ENCODE measurements at regions of chr9 and their contacts with region 1.

Region 1: DNA sequence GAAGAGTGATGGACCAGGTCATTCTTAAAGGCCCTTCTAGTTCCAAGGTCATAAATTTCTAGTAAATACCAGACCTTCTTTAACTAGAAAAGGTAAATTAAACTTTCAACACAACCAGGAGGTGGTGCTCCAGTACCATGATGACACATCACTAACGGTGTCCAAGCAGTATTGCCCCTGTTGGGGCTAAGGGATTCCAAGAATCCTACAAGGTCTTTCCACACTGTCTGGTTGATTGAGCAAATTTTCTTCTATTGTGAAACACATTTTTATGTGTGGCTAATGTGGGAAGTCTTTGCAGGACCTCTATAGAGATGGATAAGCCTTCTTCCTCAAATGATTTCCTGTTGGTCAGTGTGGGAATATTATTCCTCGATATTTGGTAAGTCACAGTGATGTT is 459.6 kb upstream of the PAPPA start:
- DNase-seq: peak; percentile 65
- H3K4me3 ChIP-seq: no peak overlapping the region
- H3K27ac ChIP-seq: no peak overlapping the region
- H3K4me1 ChIP-seq: peaks cover 20% of the 10 kb centered on the region
- H3K27me3 ChIP-seq: no peaks in the 10 kb centered on the region
- CTCF ChIP-seq: peak; percentile 41 to 60

Region 2: DNA sequence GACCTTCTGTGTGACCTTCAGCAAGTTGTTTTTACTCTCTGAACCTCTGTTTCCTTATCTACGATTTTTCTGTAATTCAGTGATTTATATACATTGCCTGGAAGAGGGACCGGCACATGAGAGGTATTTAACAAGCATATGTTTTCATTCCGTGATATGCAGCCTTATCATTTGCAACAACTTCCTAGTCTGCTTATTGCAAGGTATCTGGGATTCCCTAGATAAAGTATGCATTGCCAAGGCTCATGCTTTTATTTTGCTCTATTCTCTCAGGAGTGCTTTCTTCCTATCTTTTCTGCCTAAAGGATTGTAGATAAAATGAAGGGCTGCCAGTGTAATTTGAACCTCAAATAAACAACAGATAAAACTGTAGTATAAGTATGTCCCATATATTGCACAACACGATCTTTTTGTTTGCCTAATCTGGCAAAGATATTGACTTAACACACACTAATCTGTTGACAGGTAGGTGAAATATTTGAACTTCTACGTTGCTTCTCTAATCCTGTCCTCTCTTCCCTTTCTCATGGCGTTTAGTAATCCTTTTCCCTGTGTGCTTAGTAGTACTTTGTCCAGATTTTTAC is 198.9 kb before region 1 on chr9:
- CTCF ChIA-PET with region 1: no interaction called
- dilution Hi-C with region 1: no loop called
- in situ Hi-C with region 1: no loop called
- intact Hi-C with region 1: no loop called
- DNase-seq: no peak
- H3K4me3 ChIP-seq: no peak overlapping the region
- H3K27ac ChIP-seq: no peak overlapping the region
- H3K4me1 ChIP-seq: peaks cover 5% of the 10 kb centered on the region
- H3K27me3 ChIP-seq: no peaks in the 10 kb centered on the region
- CTCF ChIP-seq: no peak

Region 3: DNA sequence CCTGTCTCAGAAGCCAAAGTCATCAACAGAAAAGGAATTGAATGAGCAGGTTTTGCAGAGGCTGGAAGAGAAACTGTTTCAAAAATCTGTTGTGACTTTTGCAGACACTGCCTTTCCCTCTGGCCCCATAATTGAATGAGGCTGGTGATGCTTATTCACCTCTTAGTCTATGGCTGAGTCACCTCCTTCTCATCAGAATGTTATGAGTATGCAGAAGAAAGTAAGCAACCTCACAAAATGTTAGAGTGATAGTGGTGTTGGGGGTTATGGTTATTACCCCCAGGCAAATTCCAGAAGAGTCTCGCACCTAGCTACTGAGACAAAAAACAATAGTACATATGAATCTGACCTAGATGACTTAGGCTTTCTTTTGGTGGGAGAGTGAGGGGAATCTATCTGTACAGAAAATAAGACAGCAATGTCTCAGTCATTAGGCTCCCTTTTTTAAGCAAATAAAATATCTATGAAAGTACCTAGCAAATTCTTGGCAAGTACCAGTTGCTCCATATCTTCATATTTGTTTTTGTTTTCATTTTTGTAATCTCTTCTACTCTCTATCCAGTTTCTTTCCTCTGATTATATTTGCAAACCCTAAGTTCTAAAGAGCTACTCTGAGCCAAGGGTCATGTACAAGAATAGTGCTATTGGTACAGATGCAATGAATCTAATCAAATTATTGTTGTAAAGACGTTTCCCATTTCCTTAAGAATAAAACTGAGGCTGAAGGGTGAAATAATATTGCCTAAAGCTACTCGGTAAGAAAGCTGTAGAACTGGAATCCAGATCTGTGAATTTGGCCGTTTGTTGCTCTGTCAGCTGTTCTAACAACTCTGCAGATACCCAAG is 78.0 kb before region 1 on chr9:
- CTCF ChIA-PET with region 1: interaction called, 4 read pairs
- dilution Hi-C with region 1: no loop called
- in situ Hi-C with region 1: no loop called
- intact Hi-C with region 1: loop called (anchors 1 kb)
- DNase-seq: peak; percentile 96
- H3K4me3 ChIP-seq: no peak overlapping the region
- H3K27ac ChIP-seq: peak overlapping the region; percentile 98
- H3K4me1 ChIP-seq: peaks cover 30% of the 10 kb centered on the region
- H3K27me3 ChIP-seq: no peaks in the 10 kb centered on the region
- CTCF ChIP-seq: no peak

Region 4: GRCh38 chr9:115712981-115713380 is 19.0 kb after region 1 on chr9:
- CTCF ChIA-PET with region 1: no interaction called
- dilution Hi-C with region 1: no loop called
- in situ Hi-C with region 1: no loop called
- intact Hi-C with region 1: no loop called
- DNase-seq: no peak
- H3K4me3 ChIP-seq: no peak overlapping the region
- H3K27ac ChIP-seq: no peak overlapping the region
- H3K4me1 ChIP-seq: peaks cover 10% of the 10 kb centered on the region
- H3K27me3 ChIP-seq: no peaks in the 10 kb centered on the region
- CTCF ChIP-seq: no peak

Region 5: GRCh38 chr9:115883457-115884329 is 189.7 kb after region 1 on chr9:
- CTCF ChIA-PET with region 1: no interaction called
- dilution Hi-C with region 1: no loop called
- in situ Hi-C with region 1: no loop called
- intact Hi-C with region 1: loop called (anchors 1 kb)
- DNase-seq: peak; percentile 66
- H3K4me3 ChIP-seq: no peak overlapping the region
- H3K27ac ChIP-seq: no peak overlapping the region
- H3K4me1 ChIP-seq: no peaks in the 10 kb centered on the region
- H3K27me3 ChIP-seq: no peaks in the 10 kb centered on the region
- CTCF ChIP-seq: peak; percentile 74 to 86

Region 6: DNA sequence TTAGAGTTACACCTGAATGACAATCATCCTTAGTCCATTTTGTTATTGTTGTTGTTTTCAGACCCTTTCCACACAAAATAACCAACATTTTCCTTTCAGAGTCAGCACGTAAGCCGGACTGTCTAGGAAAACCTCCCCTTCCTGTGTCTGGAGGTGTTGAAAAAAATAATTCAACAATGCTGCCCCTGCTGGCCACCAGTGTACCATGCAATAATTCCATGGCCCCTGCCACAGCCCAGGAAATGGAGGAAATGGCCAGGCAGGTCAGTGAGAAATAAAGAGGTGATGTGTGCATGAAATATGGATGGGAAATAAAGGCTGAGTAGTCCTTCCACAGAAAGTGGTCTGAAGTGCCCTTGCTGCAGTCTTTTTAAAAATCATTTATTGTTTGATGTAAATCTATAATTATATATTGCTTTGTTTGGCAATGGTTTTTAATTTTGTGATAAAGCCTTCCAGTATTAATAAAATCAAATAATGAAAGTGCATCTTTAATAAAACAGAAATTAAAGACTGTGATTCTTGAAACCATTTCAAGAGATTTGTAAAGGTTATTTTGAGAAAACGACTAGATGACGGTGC is 306.8 kb after region 1 on chr9:
- CTCF ChIA-PET with region 1: no interaction called
- dilution Hi-C with region 1: no loop called
- in situ Hi-C with region 1: no loop called
- intact Hi-C with region 1: loop called (anchors 5 kb)
- DNase-seq: no peak
- H3K4me3 ChIP-seq: no peak overlapping the region
- H3K27ac ChIP-seq: no peak overlapping the region
- H3K4me1 ChIP-seq: peaks cover 34% of the 10 kb centered on the region
- H3K27me3 ChIP-seq: no peaks in the 10 kb centered on the region
- CTCF ChIP-seq: peak; percentile 48 to 61

Region 7: DNA sequence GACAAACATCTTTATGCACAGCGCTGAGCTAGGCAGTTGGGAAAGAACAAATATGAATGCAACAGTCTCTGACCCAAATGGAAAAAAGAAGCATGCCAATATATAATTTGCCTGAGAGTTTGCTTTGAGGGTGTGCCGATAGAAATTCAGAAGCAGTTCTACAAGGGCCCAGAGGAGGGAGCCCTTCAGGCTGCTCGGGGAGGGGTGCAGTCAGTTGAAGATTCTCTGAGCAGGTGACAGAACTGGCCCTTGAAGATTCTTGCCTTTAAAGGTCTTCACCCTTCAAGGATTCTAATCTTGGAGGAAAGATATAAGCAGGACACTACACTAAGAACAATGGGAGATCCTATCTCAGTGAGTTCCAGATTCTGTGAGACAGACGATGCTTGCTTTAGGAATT is 455.8 kb after region 1 on chr9:
- CTCF ChIA-PET with region 1: no interaction called
- dilution Hi-C with region 1: no loop called
- in situ Hi-C with region 1: no loop called
- intact Hi-C with region 1: loop called (anchors 5 kb)
- DNase-seq: no peak
- H3K4me3 ChIP-seq: no peak overlapping the region
- H3K27ac ChIP-seq: no peak overlapping the region
- H3K4me1 ChIP-seq: peaks cover 18% of the 10 kb centered on the region
- H3K27me3 ChIP-seq: peaks cover 6% of the 10 kb centered on the region
- CTCF ChIP-seq: peak; percentile 69 to 79

Region 8: DNA sequence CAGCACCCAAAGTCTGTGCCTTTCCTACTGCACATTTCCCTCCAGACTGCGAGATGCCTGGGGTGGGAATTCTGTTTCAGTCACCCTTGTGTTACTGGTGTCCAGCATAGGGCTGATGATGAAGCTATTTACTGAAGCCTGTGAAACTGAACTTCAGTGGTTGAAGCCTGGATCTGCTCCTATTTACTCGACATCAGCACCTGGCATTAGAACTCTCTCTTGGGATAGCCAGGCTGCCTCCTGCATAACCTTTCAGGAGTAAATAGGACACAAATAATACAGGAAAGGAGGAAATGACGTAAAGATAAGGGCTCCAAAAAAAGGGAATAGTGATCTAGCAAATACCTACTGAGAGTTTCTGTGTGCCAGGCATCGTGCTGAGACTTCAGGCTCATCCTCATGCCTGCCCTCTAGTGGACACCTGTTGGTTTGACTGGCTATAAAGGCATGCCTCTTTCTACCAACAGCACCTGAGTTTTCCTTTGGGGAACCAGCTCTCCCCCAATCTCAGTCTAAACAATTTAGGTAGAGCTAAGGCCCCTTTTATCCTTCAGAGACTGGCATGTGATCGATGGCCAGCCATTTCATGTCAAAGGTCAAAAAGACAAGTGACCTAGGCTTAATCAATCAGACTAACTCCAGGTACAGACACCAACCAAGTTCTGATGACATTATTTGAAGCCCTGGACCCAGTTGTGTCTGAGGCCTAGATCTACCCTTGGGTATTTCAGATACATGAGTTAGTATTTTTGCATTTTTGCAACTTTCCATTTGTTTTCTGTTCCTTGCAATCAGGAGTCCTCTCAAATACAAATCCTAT is 801.0 kb after region 1 on chr9:
- CTCF ChIA-PET with region 1: no interaction called
- dilution Hi-C with region 1: no loop called
- in situ Hi-C with region 1: no loop called
- intact Hi-C with region 1: loop called (anchors 5 kb)
- DNase-seq: no peak
- H3K4me3 ChIP-seq: no peak overlapping the region
- H3K27ac ChIP-seq: no peak overlapping the region
- H3K4me1 ChIP-seq: no peaks in the 10 kb centered on the region
- H3K27me3 ChIP-seq: no peaks in the 10 kb centered on the region
- CTCF ChIP-seq: peak; percentile 83 to 86

Region 9: GRCh38 chr9:116646661-116647512 is 952.9 kb after region 1 on chr9:
- CTCF ChIA-PET with region 1: no interaction called
- dilution Hi-C with region 1: no loop called
- in situ Hi-C with region 1: no loop called
- intact Hi-C with region 1: loop called (anchors 5 kb)
- DNase-seq: peak; percentile 28
- H3K4me3 ChIP-seq: no peak overlapping the region
- H3K27ac ChIP-seq: no peak overlapping the region
- H3K4me1 ChIP-seq: no peaks in the 10 kb centered on the region
- H3K27me3 ChIP-seq: no peaks in the 10 kb centered on the region
- CTCF ChIP-seq: peak; percentile 69 to 81